A673 (cell line): ENCODE measurements at regions of chr3 and their contacts with region 1.

Region 1: DNA sequence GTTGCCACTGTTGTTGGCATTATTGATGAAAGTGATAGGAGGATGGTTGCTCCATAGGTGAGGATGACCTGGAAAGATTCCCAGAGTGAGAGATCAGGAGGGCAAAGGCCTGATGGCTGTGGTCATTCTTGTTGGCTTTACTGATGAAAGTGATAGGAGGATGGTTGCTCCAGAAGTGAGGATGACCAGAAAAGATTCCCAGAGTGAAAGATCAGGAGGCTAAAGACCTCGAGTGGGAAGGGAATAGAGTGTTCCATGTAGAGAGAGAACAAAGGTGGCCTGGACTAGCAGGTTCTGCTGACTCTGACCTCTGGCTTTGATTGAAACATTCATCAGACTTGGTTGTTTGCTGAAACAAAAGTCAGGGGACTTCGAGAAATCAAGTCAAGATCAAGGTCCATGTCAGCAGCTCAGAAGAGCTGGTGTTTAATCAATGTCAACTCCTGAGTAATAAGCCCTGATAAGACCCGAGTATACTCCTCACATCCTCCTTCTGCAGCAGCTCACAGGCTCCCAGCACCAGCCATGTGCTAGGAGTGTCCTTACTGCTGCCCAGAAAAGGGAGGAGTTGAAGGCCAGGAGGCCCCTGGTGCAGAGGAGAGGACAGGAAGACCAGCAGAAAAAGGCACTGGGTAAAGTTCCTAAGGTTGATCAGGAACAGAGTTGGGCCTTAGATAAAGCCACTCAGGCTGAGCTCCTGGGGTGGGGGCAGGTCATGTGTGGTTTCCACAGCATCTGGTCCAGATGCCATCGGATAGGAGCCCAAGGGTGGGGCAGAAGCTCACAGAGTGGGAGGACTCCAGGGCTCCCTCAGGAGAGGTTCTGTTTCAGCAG is 19.9 kb downstream of the CYP8B1 start:
- DNase-seq: no peak
- H3K4me3 ChIP-seq: no peak overlapping the region
- H3K27ac ChIP-seq: no peak overlapping the region
- H3K4me1 ChIP-seq: no peaks in the 10 kb centered on the region
- H3K27me3 ChIP-seq: no peaks in the 10 kb centered on the region
- CTCF ChIP-seq: no peak

Region 2: DNA sequence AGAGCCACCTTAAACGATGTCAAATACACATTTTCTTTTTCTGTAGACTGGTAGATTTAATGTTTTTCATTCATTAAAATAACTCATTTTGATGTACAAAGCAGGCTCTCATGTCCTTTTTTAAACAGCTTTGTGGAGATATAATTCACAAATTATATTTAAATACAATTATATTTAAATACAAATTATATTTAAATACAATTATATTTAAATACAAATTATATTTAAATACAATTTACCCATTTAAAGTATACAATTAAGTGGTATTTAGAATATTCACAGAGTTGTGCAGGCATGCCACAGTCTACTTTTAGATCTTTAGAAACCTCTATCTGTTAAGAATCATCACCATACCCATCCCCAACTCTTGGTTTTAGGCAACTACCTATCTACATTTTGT is 86.9 kb after region 1 on chr3:
- CTCF ChIA-PET with region 1: no interaction called
- POLR2A ChIA-PET with region 1: interaction called, 12 read pairs
- intact Hi-C with region 1: no loop called
- DNase-seq: no peak
- H3K4me3 ChIP-seq: no peak overlapping the region
- H3K27ac ChIP-seq: no peak overlapping the region
- H3K4me1 ChIP-seq: no peaks in the 10 kb centered on the region
- H3K27me3 ChIP-seq: no peaks in the 10 kb centered on the region
- CTCF ChIP-seq: no peak

Region 3: GRCh38 chr3:43001094-43001553 is 145.4 kb after region 1 on chr3:
- CTCF ChIA-PET with region 1: no interaction called
- POLR2A ChIA-PET with region 1: no interaction called
- intact Hi-C with region 1: no loop called
- DNase-seq: no peak
- H3K4me3 ChIP-seq: no peak overlapping the region
- H3K27ac ChIP-seq: no peak overlapping the region
- H3K4me1 ChIP-seq: no peaks in the 10 kb centered on the region
- H3K27me3 ChIP-seq: no peaks in the 10 kb centered on the region
- CTCF ChIP-seq: no peak